ENCODE measurements at regions of chr3 and their contacts with region 1.

Region 1: DNA sequence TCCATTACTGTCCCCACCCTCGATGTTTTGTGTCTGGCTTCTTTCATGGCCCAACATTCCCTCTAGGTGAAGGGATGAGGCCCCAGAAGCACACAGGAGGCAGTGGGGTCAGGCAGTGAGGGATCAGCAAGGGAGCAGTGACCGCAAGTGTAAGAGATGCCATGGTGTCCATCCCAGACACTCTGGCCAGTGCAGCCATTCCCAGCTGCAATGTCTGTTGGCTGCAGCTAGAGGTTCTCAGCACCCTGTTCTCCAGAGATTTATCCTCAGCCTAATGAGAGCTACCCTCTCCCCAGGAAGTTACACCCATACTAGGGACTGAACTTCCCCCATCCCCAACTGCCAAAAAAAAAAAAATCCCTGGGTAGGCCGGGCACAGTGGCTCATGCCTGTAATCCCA is 40.2 kb downstream of the TRANK1 start:
- DNase-seq: no peak
- ATAC-seq: no peak
- H3K4me3 ChIP-seq: no peak overlapping the region
- H3K4me3 Mint-ChIP-seq: peak overlapping the region; percentile 84
- H3K27ac ChIP-seq: peak overlapping the region in 1 of 2 donors; percentile 58
- H3K27ac Mint-ChIP-seq: peak overlapping the region; percentile 79
- H3K4me1 ChIP-seq: peaks cover 69 to 87% of the 10 kb centered on the region in 2 donors
- H3K4me1 Mint-ChIP-seq: peaks cover 82% of the 10 kb centered on the region
- H3K27me3 ChIP-seq: no peaks in the 10 kb centered on the region
- H3K27me3 Mint-ChIP-seq: no peaks in the 10 kb centered on the region
- CTCF ChIP-seq: no peak

Region 2: GRCh38 chr3:36295296-36295695 is 609.3 kb before region 1 on chr3:
- CTCF ChIA-PET with region 1: no interaction called
- POLR2A ChIA-PET with region 1: no interaction called
- intact Hi-C with region 1: no loop called
- DNase-seq: no peak
- ATAC-seq: no peak
- H3K4me3 ChIP-seq: no peak overlapping the region
- H3K4me3 Mint-ChIP-seq: no peak overlapping the region
- H3K27ac ChIP-seq: no peak overlapping the region
- H3K27ac Mint-ChIP-seq: no peak overlapping the region
- H3K4me1 ChIP-seq: no peaks in the 10 kb centered on the region
- H3K4me1 Mint-ChIP-seq: no peaks in the 10 kb centered on the region
- H3K27me3 ChIP-seq: no peaks in the 10 kb centered on the region
- H3K27me3 Mint-ChIP-seq: no peaks in the 10 kb centered on the region
- CTCF ChIP-seq: no peak

Region 3: DNA sequence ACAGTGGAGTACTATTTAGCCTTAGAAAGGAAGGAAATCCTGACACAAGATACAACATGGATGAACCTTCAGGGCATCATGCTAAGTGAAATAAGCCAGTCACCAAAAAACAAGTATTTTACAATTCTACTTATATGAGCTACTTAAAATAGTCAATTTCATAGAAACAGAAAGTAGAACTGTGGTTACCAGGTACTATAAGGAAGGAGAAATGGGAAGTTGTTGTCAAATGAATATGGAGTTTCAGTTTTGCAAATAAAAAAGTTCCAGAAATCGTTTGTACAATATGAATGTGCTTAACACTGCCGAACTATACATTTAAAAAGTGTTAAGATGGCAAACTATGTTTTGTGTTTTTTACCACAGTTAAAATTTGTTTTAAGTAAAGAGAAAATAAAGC is 13.4 kb after region 1 on chr3:
- CTCF ChIA-PET with region 1: interaction called, 6 read pairs
- POLR2A ChIA-PET with region 1: interaction called, 6 read pairs
- intact Hi-C with region 1: loop called (anchors 2 kb)
- DNase-seq: peak; percentile 73
- ATAC-seq: peak; percentile 52
- H3K4me3 ChIP-seq: peak overlapping the region in 3 of 5 experiments; percentile 11 to 34 (median 27)
- H3K4me3 Mint-ChIP-seq: peak overlapping the region; percentile 79
- H3K27ac ChIP-seq: peak overlapping the region; percentile 14 to 21
- H3K27ac Mint-ChIP-seq: peak overlapping the region; percentile 77
- H3K4me1 ChIP-seq: peaks cover 28 to 48% of the 10 kb centered on the region in 2 donors
- H3K4me1 Mint-ChIP-seq: peaks cover 46% of the 10 kb centered on the region
- H3K27me3 ChIP-seq: no peaks in the 10 kb centered on the region
- H3K27me3 Mint-ChIP-seq: no peaks in the 10 kb centered on the region
- CTCF ChIP-seq: no peak

Region 4: GRCh38 chr3:37386627-37387230 is 482.1 kb after region 1 on chr3:
- CTCF ChIA-PET with region 1: no interaction called
- POLR2A ChIA-PET with region 1: no interaction called
- intact Hi-C with region 1: no loop called
- DNase-seq: no peak
- ATAC-seq: no peak
- H3K4me3 ChIP-seq: no peak overlapping the region
- H3K4me3 Mint-ChIP-seq: no peak overlapping the region
- H3K27ac ChIP-seq: no peak overlapping the region
- H3K27ac Mint-ChIP-seq: no peak overlapping the region
- H3K4me1 ChIP-seq: no peaks in the 10 kb centered on the region
- H3K4me1 Mint-ChIP-seq: peaks cover 1% of the 10 kb centered on the region
- H3K27me3 ChIP-seq: no peaks in the 10 kb centered on the region
- H3K27me3 Mint-ChIP-seq: no peaks in the 10 kb centered on the region
- CTCF ChIP-seq: no peak

Measured in B cell (primary cell).